ENCODE measurements at regions of chr3 and their contacts with region 1.

Region 1: DNA sequence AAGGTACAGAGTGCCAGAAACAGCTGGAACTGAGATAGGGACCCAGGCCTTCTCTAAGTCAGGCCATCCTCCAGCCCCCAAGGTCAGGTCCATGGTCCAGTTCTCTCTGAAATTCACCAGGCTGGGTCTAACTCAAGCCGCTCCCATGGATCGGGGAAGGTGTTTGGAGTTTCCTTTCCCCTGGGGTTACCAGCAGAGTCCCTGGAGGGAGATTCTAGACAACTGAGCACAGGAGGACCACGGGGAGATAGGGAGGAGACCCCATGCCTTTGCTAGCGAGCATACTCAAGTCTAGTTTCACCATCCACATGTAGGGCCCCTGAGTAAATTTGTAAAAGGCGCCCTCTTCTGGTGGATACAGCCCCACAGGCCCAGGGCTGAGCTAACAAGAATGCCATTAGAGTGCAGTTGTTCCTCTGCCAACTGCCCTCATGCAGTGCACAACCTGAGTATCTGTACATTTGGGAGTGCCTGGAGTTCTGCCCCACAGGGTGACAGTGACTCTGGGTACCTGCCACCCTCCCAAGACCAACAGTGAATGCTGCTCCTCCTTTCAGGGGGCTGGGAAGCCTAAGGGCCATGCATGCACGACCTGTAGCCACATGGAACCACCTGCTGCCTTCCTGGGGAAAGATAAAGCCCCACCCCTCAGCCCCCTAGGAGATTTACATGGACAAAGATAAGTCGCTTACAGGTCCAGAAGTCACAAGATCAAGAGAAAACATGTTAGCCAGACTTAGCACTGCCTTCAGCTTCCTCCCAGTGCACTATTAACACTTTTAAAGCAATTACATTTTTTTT is 89.0 kb downstream of the IQSEC1 start:
- DNase-seq: peak; percentile 82 to 93 (median 86)
- ATAC-seq: peak; percentile 98
- H3K4me3 ChIP-seq: no peak overlapping the region
- H3K27ac ChIP-seq: peak overlapping the region; percentile 57
- H3K4me1 ChIP-seq: peaks cover 19 to 53% of the 10 kb centered on the region in 2 experiments; a peak in 4 of 5 replicates
- H3K27me3 ChIP-seq: no peaks in the 10 kb centered on the region
- CTCF ChIP-seq: peak; percentile 93 to 98 (median 95)
- EP300 ChIP-seq: peak; percentile 20; the same call in 1 of the 2 replicates
- POLR2A ChIP-seq: no peak
- RAD21 ChIP-seq: peak; percentile 89 to 96

Region 2: GRCh38 chr3:12868039-12869034 is 115.9 kb before region 1 on chr3:
- CTCF ChIA-PET with region 1: no interaction called
- POLR2A ChIA-PET with region 1: no interaction called
- in situ Hi-C with region 1: no loop called
- intact Hi-C with region 1: loop called (anchors 1 kb)
- DNase-seq: peak; percentile 85 to 97 (median 86)
- ATAC-seq: peak; percentile 89
- H3K4me3 ChIP-seq: peak overlapping the region; percentile 47
- H3K27ac ChIP-seq: peak overlapping the region; percentile 79
- H3K4me1 ChIP-seq: peaks cover 8 to 22% of the 10 kb centered on the region in 2 experiments
- H3K27me3 ChIP-seq: no peaks in the 10 kb centered on the region
- CTCF ChIP-seq: peak; percentile 92 to 98 (median 96)
- EP300 ChIP-seq: peak; percentile 45
- POLR2A ChIP-seq: peak; percentile 69
- RAD21 ChIP-seq: peak; percentile 98 to 99

Region 3: GRCh38 chr3:12901623-12902045 is 82.6 kb before region 1 on chr3:
- CTCF ChIA-PET with region 1: interaction called, 3 read pairs
- POLR2A ChIA-PET with region 1: no interaction called
- in situ Hi-C with region 1: loop called (anchors 5 kb)
- intact Hi-C with region 1: loop called (anchors 1 kb)
- DNase-seq: peak; percentile 44 to 65 (median 54)
- ATAC-seq: peak; percentile 80
- H3K4me3 ChIP-seq: no peak overlapping the region
- H3K27ac ChIP-seq: no peak overlapping the region
- H3K4me1 ChIP-seq: peaks cover 0 to 45% of the 10 kb centered on the region in 2 experiments; a peak in 3 of 5 replicates
- H3K27me3 ChIP-seq: no peaks in the 10 kb centered on the region
- CTCF ChIP-seq: peak; percentile 48 to 61 (median 57)
- EP300 ChIP-seq: no peak
- POLR2A ChIP-seq: no peak
- RAD21 ChIP-seq: peak; percentile 28 to 57; a peak in 3 of 4 replicates

Region 4: DNA sequence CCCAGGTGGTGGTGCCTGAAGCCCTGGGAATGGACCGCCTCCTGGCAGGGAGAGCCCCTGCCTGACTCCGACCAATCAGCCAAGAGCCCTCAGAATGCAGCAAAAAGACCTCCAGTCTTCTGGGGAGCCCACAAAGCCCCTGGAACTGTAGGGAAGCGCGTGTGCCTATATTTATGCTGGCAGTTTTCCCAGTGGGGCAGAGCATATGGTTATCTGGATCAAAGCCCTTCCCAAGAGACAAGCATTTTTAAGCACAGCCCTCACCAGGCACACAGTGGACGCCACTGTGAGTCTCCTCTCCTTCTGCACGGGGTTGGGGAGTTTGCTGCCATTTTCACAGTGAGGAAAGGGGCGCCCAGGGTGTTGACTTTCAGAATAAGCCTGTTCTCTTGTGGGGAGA is 61.9 kb before region 1 on chr3:
- CTCF ChIA-PET with region 1: no interaction called
- POLR2A ChIA-PET with region 1: no interaction called
- in situ Hi-C with region 1: no loop called
- intact Hi-C with region 1: loop called (anchors 2 kb)
- DNase-seq: no peak
- ATAC-seq: no peak
- H3K4me3 ChIP-seq: no peak overlapping the region
- H3K27ac ChIP-seq: no peak overlapping the region
- H3K4me1 ChIP-seq: peaks cover 0 to 22% of the 10 kb centered on the region in 2 experiments; a peak in 3 of 5 replicates
- H3K27me3 ChIP-seq: no peaks in the 10 kb centered on the region
- CTCF ChIP-seq: no peak
- EP300 ChIP-seq: no peak
- POLR2A ChIP-seq: no peak
- RAD21 ChIP-seq: no peak

Region 5: DNA sequence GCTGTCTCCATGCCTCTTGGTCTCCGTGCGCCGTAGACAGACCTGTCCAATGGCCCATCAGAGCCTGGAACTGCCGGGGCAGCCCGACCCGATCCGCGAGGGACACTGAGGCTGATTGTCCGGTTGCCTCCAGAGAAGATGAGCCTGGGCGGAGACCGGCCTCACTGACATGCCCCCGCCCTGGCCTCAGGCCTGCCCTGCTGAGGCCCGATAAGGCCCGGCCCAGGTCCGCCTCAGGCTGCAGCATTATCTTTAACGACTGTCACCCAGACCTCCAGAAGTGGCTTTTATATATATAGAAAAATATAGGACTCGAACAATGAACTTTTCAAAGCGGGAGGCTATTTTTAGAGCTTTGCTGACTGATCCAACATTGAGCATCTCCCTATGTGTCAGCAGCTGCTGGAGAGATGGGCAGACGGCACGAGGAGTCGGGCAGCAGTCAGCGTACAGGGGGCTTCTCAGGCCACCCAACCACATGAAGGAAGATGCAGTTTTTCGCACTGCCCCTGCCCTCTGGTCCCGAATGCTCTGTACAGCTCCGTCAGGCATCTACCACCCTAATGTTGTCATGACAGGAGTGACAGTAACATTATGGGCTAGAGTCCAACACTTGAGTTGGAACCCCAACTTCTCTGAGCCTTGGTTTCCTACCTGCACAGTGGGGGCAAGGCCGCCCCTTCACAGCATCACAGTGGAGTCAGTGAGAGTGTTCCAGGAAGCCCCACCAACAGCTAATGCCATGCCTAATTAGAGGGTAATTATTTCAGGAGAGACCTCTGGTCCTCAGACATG is 30.8 kb before region 1 on chr3:
- CTCF ChIA-PET with region 1: no interaction called
- POLR2A ChIA-PET with region 1: no interaction called
- in situ Hi-C with region 1: no loop called
- intact Hi-C with region 1: loop called (anchors 1 kb)
- DNase-seq: peak; percentile 95 to 99 (median 96)
- ATAC-seq: peak; percentile 94
- H3K4me3 ChIP-seq: peak overlapping the region; percentile 24
- H3K27ac ChIP-seq: peak overlapping the region; percentile 90
- H3K4me1 ChIP-seq: peaks cover 72 to 88% of the 10 kb centered on the region in 2 experiments
- H3K27me3 ChIP-seq: no peaks in the 10 kb centered on the region
- CTCF ChIP-seq: no peak
- EP300 ChIP-seq: peak; percentile 95
- POLR2A ChIP-seq: peak; percentile 73; the same call in 1 of the 2 replicates
- RAD21 ChIP-seq: no peak

Region 6: GRCh38 chr3:13332158-13332557 is 347.9 kb after region 1 on chr3:
- CTCF ChIA-PET with region 1: no interaction called
- POLR2A ChIA-PET with region 1: no interaction called
- in situ Hi-C with region 1: no loop called
- intact Hi-C with region 1: no loop called
- DNase-seq: no peak
- ATAC-seq: no peak
- H3K4me3 ChIP-seq: no peak overlapping the region
- H3K27ac ChIP-seq: no peak overlapping the region
- H3K4me1 ChIP-seq: 0 out of 5 replicates have a peak, but pooled peaks cover 0 to 4% of the 10 kb centered on the region in 2 experiments
- H3K27me3 ChIP-seq: no peaks in the 10 kb centered on the region
- CTCF ChIP-seq: no peak
- EP300 ChIP-seq: no peak
- POLR2A ChIP-seq: no peak
- RAD21 ChIP-seq: no peak

Measured in K562 (cell line).